ENCODE measurements at regions of chr19 and their contacts with region 1.

Region 1: DNA sequence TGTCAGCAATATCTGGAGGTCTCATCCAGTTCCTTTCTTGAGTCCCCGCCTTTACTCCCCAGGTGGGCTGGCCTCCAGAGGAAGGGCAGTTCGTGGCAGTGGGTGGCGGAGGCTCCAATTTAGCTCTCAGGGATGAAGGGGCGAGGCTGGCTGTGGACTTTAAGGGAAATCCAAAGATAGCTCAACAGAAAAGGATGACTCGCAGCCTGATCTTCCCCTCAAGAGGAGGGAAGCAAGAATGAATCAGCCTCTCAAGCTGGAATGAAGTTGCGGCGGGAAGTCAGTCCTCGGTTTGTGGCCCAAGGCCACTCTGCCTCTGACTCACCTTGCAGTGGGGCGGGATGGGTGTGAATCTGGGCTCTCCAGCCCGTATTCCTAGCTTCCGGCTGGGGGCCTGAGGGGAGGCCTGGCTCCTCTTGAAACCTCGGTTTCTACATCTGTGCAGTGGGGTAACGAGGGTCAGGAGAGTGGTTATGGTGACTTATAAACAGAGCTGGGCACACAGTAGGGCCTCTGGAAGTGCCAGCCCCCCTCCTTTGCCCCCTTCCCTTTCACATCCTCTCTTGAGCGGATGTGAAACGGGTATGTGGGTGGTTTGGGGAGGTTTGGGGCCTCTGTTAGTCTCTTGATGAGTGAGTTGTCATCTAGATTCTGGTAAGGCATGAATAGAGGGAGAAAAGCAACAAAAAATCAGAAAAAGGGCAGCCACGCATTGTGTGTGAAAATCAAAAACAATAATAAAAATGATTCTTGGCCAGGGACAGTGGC is 10.5 kb upstream of the SMG9 start:
- DNase-seq: peak; percentile 96
- H3K4me3 Mint-ChIP-seq: peak overlapping the region; percentile 64
- H3K27ac Mint-ChIP-seq: peak overlapping the region; percentile 99
- H3K4me1 Mint-ChIP-seq: peaks cover 82% of the 10 kb centered on the region
- H3K27me3 Mint-ChIP-seq: peaks cover 1% of the 10 kb centered on the region

Region 2: GRCh38 chr19:43354305-43354627 is 411.0 kb before region 1 on chr19:
- CTCF ChIA-PET with region 1: no interaction called
- POLR2A ChIA-PET with region 1: no interaction called
- intact Hi-C with region 1: no loop called
- DNase-seq: no peak
- H3K4me3 Mint-ChIP-seq: no peak overlapping the region
- H3K27ac Mint-ChIP-seq: no peak overlapping the region
- H3K4me1 Mint-ChIP-seq: no peaks in the 10 kb centered on the region
- H3K27me3 Mint-ChIP-seq: peaks cover 12% of the 10 kb centered on the region

Region 3: DNA sequence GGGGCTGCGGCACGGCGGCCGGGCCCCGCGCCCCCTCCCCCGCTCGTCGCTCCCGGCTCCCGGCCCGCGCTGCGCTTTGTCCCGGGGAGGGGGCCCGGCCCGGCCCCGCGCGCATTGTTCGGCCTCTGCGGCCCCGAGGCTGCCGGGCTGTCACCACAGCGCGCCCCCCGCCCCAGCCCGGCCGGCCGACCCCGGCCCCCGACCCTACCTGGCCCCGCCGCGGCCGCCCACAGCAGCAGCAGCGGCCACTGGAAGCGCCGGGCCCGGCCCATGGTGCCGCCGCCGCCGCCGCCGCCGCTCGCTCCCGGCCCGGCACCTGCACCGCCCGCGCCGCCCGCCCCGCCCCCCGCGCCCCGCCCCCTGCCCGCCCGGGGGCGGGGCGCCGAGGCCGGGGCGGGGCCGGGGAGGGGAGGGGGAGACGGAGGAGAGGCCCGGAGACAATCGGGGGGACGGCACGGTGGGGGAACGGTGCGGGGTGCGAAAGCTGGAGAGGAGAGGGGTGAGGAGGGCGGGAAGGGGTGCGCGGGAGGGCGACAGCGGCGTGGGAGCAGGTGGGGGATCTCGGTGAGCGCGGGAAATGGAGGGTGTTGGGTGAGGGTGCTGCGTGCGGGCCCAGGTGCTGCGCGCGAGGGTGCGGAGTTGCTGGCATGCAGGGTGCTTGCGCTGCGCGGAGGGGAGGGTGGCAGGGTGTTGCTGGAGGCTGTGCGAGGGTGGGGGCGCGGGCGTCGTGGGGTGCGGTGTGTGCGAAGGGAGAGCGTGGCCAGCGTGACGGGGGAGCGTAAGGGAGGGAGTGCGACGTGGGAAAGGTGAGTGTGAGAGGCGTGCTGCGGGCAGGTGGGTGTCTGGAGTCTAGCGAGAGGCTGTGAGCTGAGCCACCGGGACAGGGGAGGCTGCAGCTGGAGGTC is 125.5 kb before region 1 on chr19 and contains the start of gene CADM4:
- CTCF ChIA-PET with region 1: no interaction called
- POLR2A ChIA-PET with region 1: no interaction called
- intact Hi-C with region 1: no loop called
- DNase-seq: peak; percentile 54
- H3K4me3 Mint-ChIP-seq: peak within 1 kb of the TSS; percentile 69
- H3K27ac Mint-ChIP-seq: peak within 1 kb of the TSS; percentile 18
- H3K4me1 Mint-ChIP-seq: peaks cover 14% of the 10 kb centered on the region
- H3K27me3 Mint-ChIP-seq: peaks cover 31% of the 10 kb centered on the region
- total RNA-seq, gene CADM4: 0.39 to 0.57 TPM

Region 4: GRCh38 chr19:43687660-43687997 is 77.7 kb before region 1 on chr19:
- CTCF ChIA-PET with region 1: no interaction called
- POLR2A ChIA-PET with region 1: no interaction called
- intact Hi-C with region 1: no loop called
- DNase-seq: no peak
- H3K4me3 Mint-ChIP-seq: no peak overlapping the region
- H3K27ac Mint-ChIP-seq: no peak overlapping the region
- H3K4me1 Mint-ChIP-seq: peaks cover 3% of the 10 kb centered on the region
- H3K27me3 Mint-ChIP-seq: no peaks in the 10 kb centered on the region

Region 5: DNA sequence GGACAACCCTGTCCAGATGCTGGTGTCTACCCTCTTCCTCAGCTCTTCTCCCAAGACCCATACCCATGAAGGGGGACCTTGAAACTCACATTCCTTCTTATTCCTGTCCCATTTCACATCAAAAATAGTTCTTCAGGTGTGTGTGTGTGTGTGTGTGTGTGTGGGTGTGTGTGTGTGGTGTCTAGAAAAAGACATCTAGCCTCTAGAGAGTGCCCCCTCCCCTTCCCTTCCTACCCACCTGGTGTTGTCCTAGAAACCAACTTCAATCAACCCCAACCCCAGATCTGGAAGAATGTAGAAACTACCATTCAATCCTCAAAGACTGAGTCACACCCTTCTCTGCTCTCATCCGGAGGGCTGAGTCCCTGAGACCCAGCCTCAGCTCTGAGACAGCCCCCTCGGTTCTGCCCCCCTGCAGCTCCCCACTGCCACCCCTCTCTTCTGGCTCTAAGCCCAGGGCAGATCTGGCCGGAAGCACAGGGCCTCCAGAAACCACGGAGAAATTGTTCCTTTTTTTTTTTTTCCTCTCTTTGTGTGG is 11.9 kb after region 1 on chr19:
- CTCF ChIA-PET with region 1: interaction called, 175 read pairs
- POLR2A ChIA-PET with region 1: interaction called, 127 read pairs
- intact Hi-C with region 1: loop called (anchors 1 kb)
- DNase-seq: peak; percentile 62
- H3K4me3 Mint-ChIP-seq: peak overlapping the region; percentile 80
- H3K27ac Mint-ChIP-seq: peak overlapping the region; percentile 92
- H3K4me1 Mint-ChIP-seq: peaks cover 57% of the 10 kb centered on the region
- H3K27me3 Mint-ChIP-seq: no peaks in the 10 kb centered on the region

Region 6: DNA sequence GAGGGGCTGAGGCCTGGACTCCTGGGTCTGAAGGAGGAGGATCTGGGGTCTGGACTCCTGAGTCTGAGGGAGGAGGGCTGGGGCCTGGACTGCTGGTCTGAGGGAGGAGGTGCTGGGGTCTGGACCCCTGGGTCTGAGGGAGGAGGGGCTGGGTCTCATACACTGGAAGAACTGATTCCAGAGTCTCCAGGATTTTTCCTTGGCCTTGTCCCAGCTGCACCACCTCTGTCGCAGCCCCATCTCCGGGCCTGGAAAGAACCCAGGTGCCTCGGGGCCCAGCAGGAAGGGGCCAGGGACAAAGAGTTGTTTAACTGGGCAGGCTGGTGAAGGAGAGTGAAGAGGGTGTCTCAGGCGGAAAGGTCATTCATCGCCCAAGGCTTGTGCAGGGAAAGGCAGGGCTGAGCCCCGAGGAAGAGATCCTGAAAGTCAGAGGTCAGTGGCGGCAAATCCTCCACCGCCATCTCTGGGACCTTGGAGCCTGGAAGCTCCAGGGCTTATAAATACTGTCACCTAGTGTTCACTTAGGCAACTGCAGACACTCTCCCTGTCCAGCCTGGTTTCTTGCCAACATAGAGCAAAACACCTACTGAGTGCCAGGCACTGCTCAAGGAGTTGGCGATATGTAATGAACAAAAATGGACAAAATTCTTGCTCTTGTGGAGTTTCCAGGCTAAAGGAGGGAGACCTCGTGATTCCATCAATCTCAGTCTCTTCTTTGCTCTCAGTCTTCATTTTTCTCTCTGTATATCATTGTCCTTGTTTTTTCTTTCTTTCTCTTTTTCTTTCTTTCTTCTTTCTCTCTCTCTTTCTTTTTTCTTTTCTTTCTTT is 19.9 kb after region 1 on chr19:
- CTCF ChIA-PET with region 1: interaction called, 175 read pairs
- POLR2A ChIA-PET with region 1: interaction called, 127 read pairs
- intact Hi-C with region 1: loop called (anchors 1 kb)
- DNase-seq: peak; percentile 70
- H3K4me3 Mint-ChIP-seq: peak overlapping the region; percentile 75
- H3K27ac Mint-ChIP-seq: peak overlapping the region; percentile 96
- H3K4me1 Mint-ChIP-seq: peaks cover 39% of the 10 kb centered on the region
- H3K27me3 Mint-ChIP-seq: peaks cover 1% of the 10 kb centered on the region

Region 7: GRCh38 chr19:43809762-43810696 is 44.7 kb after region 1 on chr19:
- CTCF ChIA-PET with region 1: interaction called, 14 read pairs
- POLR2A ChIA-PET with region 1: no interaction called
- intact Hi-C with region 1: no loop called
- DNase-seq: no peak
- H3K4me3 Mint-ChIP-seq: no peak overlapping the region
- H3K27ac Mint-ChIP-seq: no peak overlapping the region
- H3K4me1 Mint-ChIP-seq: peaks cover 6% of the 10 kb centered on the region
- H3K27me3 Mint-ChIP-seq: peaks cover 4% of the 10 kb centered on the region

Region 8: GRCh38 chr19:43939557-43940260 is 174.4 kb after region 1 on chr19:
- CTCF ChIA-PET with region 1: no interaction called
- POLR2A ChIA-PET with region 1: no interaction called
- intact Hi-C with region 1: no loop called
- DNase-seq: no peak
- H3K4me3 Mint-ChIP-seq: no peak overlapping the region
- H3K27ac Mint-ChIP-seq: no peak overlapping the region
- H3K4me1 Mint-ChIP-seq: no peaks in the 10 kb centered on the region
- H3K27me3 Mint-ChIP-seq: peaks cover 2% of the 10 kb centered on the region

Measured in activated CD4-positive, alpha-beta memory T cell treated with anti-CD3 and anti-CD28 coated beads for 36 hours (primary cell).